Esophagus muscularis mucosa (tissue), 4 donors: ENCODE measurements at regions of chr22 and their contacts with region 1.

Region 1: GRCh38 chr22:17562906-17563870 is at the start of gene SLC25A18:
- DNase-seq: no peak
- H3K4me3 ChIP-seq: peak within 1 kb of the TSS in 3 of 4 donors; percentile 12 to 27 (median 14)
- H3K27ac ChIP-seq: peak within 1 kb of the TSS; percentile 68 to 95 (median 80)
- H3K4me1 ChIP-seq: peaks cover 24 to 36% (median 31%) of the 10 kb centered on the region in 4 donors
- H3K27me3 ChIP-seq: no peaks in the 10 kb centered on the region
- CTCF ChIP-seq: peak in 1 of 3 experiments; percentile 14
- EP300 ChIP-seq: no peak
- POLR2A ChIP-seq: no peak
- total RNA-seq, gene SLC25A18: 0.42 to 2.8 (median 1.8) TPM

Region 2: DNA sequence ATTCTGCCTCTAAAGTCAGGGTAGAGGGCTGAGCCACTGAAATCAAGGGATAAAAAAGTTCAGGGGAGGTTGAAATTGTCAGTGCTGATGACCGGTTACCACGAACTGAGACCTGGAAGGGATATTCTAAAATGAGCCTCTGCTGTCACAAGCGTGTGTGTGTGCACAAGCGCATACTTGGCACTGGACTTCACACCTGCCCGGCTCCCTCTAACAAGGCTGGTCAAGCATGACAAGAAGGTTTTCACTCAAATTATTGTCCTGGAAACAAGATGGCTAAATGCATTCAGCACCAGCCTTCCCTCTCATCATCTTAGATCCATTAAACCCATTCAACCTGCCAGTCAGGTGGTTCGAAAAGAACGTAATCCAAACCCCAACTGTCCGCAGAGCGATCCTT is 248.7 kb before region 1 on chr22:
- intact Hi-C with region 1: no loop called
- DNase-seq: no peak
- H3K4me3 ChIP-seq: no peak overlapping the region
- H3K27ac ChIP-seq: no peak overlapping the region
- H3K4me1 ChIP-seq: no peaks in the 10 kb centered on the region
- H3K27me3 ChIP-seq: peaks cover 0 to 33% (median 0%) of the 10 kb centered on the region in 4 donors
- CTCF ChIP-seq: no peak
- EP300 ChIP-seq: no peak
- POLR2A ChIP-seq: no peak

Region 3: DNA sequence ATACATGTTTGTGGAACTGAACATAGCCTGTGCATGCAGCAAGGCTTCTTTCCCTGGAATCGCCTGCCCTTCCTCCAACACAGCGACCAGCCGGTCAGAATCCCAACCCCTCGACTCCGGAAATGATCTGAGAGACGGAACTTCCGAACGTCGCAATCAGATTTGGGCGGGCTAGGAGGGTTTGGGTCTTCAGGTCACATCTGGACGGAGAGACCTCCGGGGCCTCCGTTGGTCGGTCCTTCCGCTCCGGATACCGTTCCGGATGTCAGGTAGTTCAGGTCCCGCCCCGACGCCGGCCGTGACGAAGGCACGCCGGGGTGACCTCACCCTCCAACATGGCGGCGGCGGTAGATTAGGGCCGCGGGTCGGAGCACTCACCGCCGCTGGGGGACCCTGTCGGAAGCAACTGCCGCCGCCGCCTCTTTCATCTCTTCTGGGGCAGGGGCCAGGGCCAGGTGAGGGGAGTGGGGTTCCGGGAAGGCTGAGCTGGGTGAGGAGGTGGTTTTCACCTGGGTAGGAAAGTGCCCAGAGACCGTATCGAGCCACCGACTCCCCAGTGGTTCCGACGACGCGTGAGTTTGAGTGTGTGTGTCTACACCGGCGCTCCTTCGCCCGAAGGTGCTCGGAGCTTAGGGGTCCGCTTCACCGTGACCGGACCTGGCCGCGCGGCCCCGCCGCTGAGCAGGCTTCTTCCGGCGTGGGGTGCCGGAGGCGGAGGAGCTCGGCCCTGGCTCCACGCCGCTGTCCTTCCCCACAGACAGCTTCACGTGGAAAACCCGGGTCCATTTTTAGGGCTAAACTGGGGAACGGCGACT is 75.5 kb after region 1 on chr22 and contains the start of gene BCL2L13:
- intact Hi-C with region 1: loop called (anchors 2 kb)
- DNase-seq: peak; percentile 98
- H3K4me3 ChIP-seq: peak within 1 kb of the TSS; percentile 81 to 88 (median 82)
- H3K27ac ChIP-seq: peak within 1 kb of the TSS; percentile 97 to 100 (median 98)
- H3K4me1 ChIP-seq: peaks cover 20 to 30% (median 24%) of the 10 kb centered on the region in 4 donors
- H3K27me3 ChIP-seq: no peaks in the 10 kb centered on the region
- CTCF ChIP-seq: peak in 2 of 3 experiments; percentile 12 to 16
- EP300 ChIP-seq: no peak
- POLR2A ChIP-seq: peak; percentile 84
- total RNA-seq, gene BCL2L13: 102 to 199 (median 133) TPM

Region 4: DNA sequence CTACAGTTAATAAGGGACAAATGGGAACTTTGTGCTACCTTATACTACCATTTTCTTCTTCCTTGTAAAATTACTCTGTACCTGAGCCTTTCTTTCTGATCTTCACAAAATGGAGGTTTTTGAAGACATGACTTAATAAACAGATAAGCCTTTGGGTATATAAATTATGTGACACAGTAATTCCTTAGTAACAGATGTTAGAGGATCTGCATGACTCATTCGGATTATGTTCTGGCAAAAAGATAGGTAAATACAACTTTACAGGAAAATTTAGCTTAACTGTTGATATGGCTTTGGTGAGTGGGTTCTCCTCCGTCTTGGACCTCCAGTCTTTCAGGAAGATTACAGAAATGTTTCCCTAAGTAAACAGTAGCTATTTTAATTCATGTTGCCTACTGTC is 149.3 kb after region 1 on chr22:
- intact Hi-C with region 1: loop called (anchors 10 kb)
- DNase-seq: peak; percentile 0
- H3K4me3 ChIP-seq: no peak overlapping the region
- H3K27ac ChIP-seq: peak overlapping the region; percentile 12 to 69 (median 40)
- H3K4me1 ChIP-seq: peaks cover 7 to 69% (median 34%) of the 10 kb centered on the region in 4 donors
- H3K27me3 ChIP-seq: no peaks in the 10 kb centered on the region
- CTCF ChIP-seq: no peak
- EP300 ChIP-seq: no peak
- POLR2A ChIP-seq: no peak

Region 5: GRCh38 chr22:17738386-17739128 is 175.4 kb after region 1 on chr22:
- intact Hi-C with region 1: loop called (anchors 5 kb)
- DNase-seq: no peak
- H3K4me3 ChIP-seq: no peak overlapping the region
- H3K27ac ChIP-seq: no peak overlapping the region
- H3K4me1 ChIP-seq: peaks cover 0 to 14% (median 3%) of the 10 kb centered on the region in 4 donors
- H3K27me3 ChIP-seq: no peaks in the 10 kb centered on the region
- CTCF ChIP-seq: no peak
- EP300 ChIP-seq: no peak
- POLR2A ChIP-seq: no peak

Region 6: GRCh38 chr22:17754233-17754925 is 191.2 kb after region 1 on chr22:
- intact Hi-C with region 1: no loop called
- DNase-seq: no peak
- H3K4me3 ChIP-seq: no peak overlapping the region
- H3K27ac ChIP-seq: no peak overlapping the region
- H3K4me1 ChIP-seq: no peaks in the 10 kb centered on the region
- H3K27me3 ChIP-seq: no peaks in the 10 kb centered on the region
- CTCF ChIP-seq: no peak
- EP300 ChIP-seq: no peak
- POLR2A ChIP-seq: no peak

Region 7: DNA sequence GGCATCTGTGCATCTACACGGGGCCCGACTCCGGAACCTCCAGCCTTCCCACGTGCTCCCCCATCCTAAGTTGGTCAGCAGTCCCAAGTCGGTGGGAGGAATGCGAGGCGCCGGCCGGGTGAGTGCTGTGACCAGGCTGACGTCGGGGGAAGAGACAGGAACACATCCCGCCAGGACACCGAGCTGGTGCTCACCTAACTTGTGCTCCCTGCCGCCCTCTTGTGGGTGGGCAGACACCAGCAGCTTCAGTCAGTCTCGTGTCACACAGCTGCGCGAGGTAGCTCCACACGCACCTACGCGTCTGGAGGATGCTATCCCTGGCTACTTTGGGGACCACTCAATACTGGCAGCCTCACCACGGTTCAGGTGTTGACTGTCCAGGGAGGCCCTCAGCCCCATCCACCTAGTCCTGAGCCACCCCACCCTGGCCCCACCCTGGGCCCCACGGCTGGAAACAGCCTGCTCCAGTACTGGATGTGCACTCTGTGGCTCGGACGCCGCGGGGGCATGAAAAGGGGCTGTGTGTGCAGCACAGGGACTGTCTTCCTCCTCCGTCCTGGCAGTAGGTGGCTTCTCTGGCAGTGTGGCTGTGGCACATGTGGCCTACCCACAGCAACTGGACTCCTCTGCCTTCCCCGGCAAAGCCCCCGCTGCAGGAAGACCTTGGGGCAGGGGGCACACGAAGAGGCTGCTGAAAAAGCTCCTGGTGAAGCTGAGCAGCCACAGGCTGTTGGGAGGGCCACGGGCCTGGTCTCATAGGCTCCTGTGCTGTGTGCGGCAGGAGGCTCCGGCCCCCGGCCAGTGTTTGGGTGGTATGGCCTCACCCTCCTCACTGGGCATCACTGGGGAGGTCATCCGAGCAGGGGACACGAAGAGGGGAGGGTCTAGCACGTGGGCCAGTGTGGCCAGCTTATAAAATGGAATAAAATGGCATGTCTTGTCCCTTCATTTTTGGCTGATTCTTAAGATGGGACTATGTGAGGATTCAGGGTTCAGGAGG is 222.3 kb after region 1 on chr22:
- intact Hi-C with region 1: loop called (anchors 2 kb)
- DNase-seq: no peak
- H3K4me3 ChIP-seq: no peak overlapping the region
- H3K27ac ChIP-seq: peak overlapping the region; percentile 52 to 75 (median 70)
- H3K4me1 ChIP-seq: peaks cover 31 to 51% (median 45%) of the 10 kb centered on the region in 4 donors
- H3K27me3 ChIP-seq: peaks cover 0 to 15% (median 0%) of the 10 kb centered on the region in 4 donors
- CTCF ChIP-seq: peak; percentile 67 to 78 (median 71)
- EP300 ChIP-seq: no peak
- POLR2A ChIP-seq: no peak

Region 8: DNA sequence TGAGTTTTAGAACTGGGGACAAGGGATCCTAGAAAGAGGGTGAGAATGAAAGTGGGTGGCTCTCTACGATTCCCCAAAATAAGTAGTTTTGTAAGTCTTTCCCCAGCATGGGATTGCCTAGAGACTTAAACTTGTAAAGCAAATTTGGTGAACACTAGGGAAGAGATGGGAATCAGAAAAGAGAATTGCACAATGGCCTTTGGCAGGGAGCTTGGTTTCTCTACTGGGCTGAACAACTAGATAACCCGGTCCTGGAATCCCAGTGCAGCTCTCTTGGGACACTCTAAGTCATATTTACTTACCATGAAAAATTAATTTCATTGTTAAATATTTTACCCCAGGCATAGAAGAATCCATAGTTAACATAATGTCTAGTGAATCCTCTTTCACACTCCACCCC is 570.3 kb after region 1 on chr22:
- intact Hi-C with region 1: no loop called
- DNase-seq: no peak
- H3K4me3 ChIP-seq: no peak overlapping the region
- H3K27ac ChIP-seq: peak overlapping the region in 1 of 4 donors; percentile 43
- H3K4me1 ChIP-seq: peaks cover 0 to 5% (median 0%) of the 10 kb centered on the region in 4 donors
- H3K27me3 ChIP-seq: no peaks in the 10 kb centered on the region
- CTCF ChIP-seq: no peak
- EP300 ChIP-seq: no peak
- POLR2A ChIP-seq: no peak